ENCODE measurements at regions of chr4 and their contacts with region 1.

Region 1: GRCh38 chr4:53015681-53016080 is 153.6 kb downstream of the RASL11B start:
- DNase-seq: no peak
- ATAC-seq: 0 out of 3 replicates have a peak, but pooled peaks have one; percentile 25
- H3K4me3 ChIP-seq: no peak overlapping the region
- H3K27ac ChIP-seq: no peak overlapping the region
- H3K4me1 ChIP-seq: peaks cover 8% of the 10 kb centered on the region; the same call in 1 of the 2 replicates
- H3K27me3 ChIP-seq: no peaks in the 10 kb centered on the region
- CTCF ChIP-seq: peak; percentile 47 to 67 (median 55)
- EP300 ChIP-seq: no peak
- POLR2A ChIP-seq: no peak
- RAD21 ChIP-seq: peak; percentile 83

Region 2: GRCh38 chr4:52837726-52838558 is 177.7 kb before region 1 on chr4:
- CTCF ChIA-PET with region 1: no interaction called
- POLR2A ChIA-PET with region 1: no interaction called
- RAD21 ChIA-PET with region 1: no interaction called
- SMC1A ChIA-PET with region 1: no interaction called
- in situ Hi-C with region 1: no loop called
- intact Hi-C with region 1: no loop called
- DNase-seq: no peak
- ATAC-seq: no peak
- H3K4me3 ChIP-seq: no peak overlapping the region
- H3K27ac ChIP-seq: no peak overlapping the region
- H3K4me1 ChIP-seq: no peaks in the 10 kb centered on the region
- H3K27me3 ChIP-seq: no peaks in the 10 kb centered on the region
- CTCF ChIP-seq: no peak
- EP300 ChIP-seq: no peak
- POLR2A ChIP-seq: no peak
- RAD21 ChIP-seq: no peak

Region 3: GRCh38 chr4:53005149-53005546 is 10.5 kb before region 1 on chr4:
- CTCF ChIA-PET with region 1: interaction called, 11 read pairs
- POLR2A ChIA-PET with region 1: no interaction called
- RAD21 ChIA-PET with region 1: interaction called, 3 read pairs
- SMC1A ChIA-PET with region 1: interaction called, 7 read pairs
- in situ Hi-C with region 1: no loop called
- intact Hi-C with region 1: no loop called
- DNase-seq: no peak
- ATAC-seq: peak; percentile 60
- H3K4me3 ChIP-seq: no peak overlapping the region
- H3K27ac ChIP-seq: peak overlapping the region; percentile 46
- H3K4me1 ChIP-seq: peaks cover 27% of the 10 kb centered on the region
- H3K27me3 ChIP-seq: no peaks in the 10 kb centered on the region
- CTCF ChIP-seq: no peak
- EP300 ChIP-seq: no peak
- POLR2A ChIP-seq: no peak
- RAD21 ChIP-seq: no peak

Region 4: GRCh38 chr4:53169695-53170617 is 154.3 kb after region 1 on chr4:
- CTCF ChIA-PET with region 1: no interaction called
- POLR2A ChIA-PET with region 1: no interaction called
- RAD21 ChIA-PET with region 1: no interaction called
- SMC1A ChIA-PET with region 1: interaction called, 8 read pairs
- in situ Hi-C with region 1: no loop called
- intact Hi-C with region 1: loop called (anchors 5 kb)
- DNase-seq: peak; percentile 45
- ATAC-seq: peak; percentile 83
- H3K4me3 ChIP-seq: no peak overlapping the region
- H3K27ac ChIP-seq: no peak overlapping the region
- H3K4me1 ChIP-seq: peaks cover 3% of the 10 kb centered on the region; the same call in 1 of the 2 replicates
- H3K27me3 ChIP-seq: no peaks in the 10 kb centered on the region
- CTCF ChIP-seq: no peak
- EP300 ChIP-seq: peak in 1 of 2 experiments; percentile 32; a peak in 2 of 4 replicates
- POLR2A ChIP-seq: no peak
- RAD21 ChIP-seq: no peak

Region 5: DNA sequence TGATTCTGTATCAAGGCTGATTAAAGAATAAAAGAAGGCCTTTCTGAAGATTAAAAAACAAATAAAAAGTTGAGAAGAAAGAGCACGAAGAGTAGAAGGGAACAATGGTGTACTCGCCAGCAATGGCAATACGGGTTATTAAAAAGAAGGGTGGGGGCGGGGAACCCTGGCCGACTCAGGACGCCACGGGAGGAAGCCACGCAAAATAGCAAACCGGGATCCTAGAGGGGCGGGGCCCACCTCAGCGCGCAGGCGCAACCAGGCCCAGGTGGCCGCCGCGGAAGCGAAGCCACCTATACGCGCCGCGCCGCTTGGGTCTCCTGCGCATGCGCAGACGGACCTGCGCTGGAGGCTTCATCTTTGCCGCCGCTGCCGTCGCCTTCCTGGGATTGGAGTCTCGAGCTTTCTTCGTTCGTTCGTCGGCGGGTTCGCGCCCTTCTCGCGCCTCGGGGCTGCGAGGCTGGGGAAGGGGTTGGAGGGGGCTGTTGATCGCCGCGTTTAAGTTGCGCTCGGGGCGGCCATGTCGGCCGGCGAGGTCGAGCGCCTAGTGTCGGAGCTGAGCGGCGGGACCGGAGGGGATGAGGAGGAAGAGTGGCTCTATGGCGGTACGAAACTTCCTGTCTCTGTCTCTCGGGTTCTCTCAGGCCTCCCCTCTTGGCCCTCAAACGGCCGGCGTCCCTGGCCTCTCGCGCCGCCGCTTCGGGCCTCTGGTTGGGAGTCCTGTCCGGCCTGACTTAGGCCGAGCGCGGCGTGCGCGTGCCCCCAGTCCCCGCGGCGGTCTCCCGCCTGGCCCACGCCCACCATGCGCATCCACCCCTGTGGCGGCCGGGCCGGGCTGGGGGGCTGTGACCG is 361.9 kb after region 1 on chr4 and contains the start of gene FIP1L1:
- CTCF ChIA-PET with region 1: interaction called, 9 read pairs
- POLR2A ChIA-PET with region 1: no interaction called
- RAD21 ChIA-PET with region 1: interaction called, 4 read pairs
- SMC1A ChIA-PET with region 1: interaction called, 3 read pairs
- in situ Hi-C with region 1: no loop called
- intact Hi-C with region 1: loop called (anchors 10 kb)
- DNase-seq: peak; percentile 78
- ATAC-seq: peak; percentile 92
- H3K4me3 ChIP-seq: peak within 1 kb of the TSS; percentile 89
- H3K27ac ChIP-seq: peak within 1 kb of the TSS; percentile 84
- H3K4me1 ChIP-seq: no peaks in the 10 kb centered on the region
- H3K27me3 ChIP-seq: no peaks in the 10 kb centered on the region
- CTCF ChIP-seq: no peak
- EP300 ChIP-seq: no peak
- POLR2A ChIP-seq: peak; percentile 92
- RAD21 ChIP-seq: no peak
- polyA plus RNA-seq, gene FIP1L1: 28.1 to 40.8 TPM

Region 6: DNA sequence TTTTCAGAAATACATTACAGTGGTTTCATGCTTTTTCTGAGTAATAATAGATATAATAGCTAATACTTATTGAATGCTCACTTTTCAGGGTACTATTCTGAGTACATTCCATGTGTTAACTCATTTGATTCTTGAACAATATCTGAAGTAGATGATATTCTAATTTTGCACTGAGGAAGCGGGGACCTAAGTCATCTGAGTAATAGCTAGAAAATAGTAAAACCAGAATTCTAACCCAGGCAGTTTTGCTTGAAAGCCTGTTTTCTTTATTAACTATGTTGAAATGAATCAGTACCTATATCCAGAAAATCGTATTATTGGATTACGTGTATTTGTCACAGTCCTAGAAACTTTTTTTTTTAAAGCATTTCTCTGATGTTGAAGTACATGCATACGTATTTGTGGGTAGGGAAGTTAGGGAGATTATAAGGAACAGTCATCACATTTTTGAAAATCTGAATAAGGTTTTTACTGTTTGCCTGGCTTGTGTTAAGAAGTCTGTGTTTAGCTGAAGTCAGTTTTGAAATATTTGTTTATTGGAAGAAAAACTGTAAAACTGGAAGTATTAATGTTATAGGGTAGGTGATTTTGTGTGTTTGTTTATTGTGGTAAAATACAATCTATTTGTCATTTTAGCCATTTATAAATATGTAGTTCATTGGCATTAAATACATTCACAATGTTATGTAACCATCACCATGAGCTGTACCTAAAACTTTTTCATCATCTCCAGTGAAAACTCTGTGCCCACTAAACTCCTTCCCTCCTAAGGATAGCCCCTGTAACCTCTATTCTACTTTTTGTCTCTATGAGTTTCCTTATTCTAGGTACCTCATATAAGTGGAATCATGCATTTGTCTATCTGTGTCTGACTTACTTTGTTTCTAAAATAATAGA is 417.1 kb after region 1 on chr4:
- CTCF ChIA-PET with region 1: no interaction called
- POLR2A ChIA-PET with region 1: no interaction called
- RAD21 ChIA-PET with region 1: interaction called, 3 read pairs
- SMC1A ChIA-PET with region 1: no interaction called
- in situ Hi-C with region 1: no loop called
- intact Hi-C with region 1: loop called (anchors 10 kb)
- DNase-seq: no peak
- ATAC-seq: peak; percentile 76
- H3K4me3 ChIP-seq: no peak overlapping the region
- H3K27ac ChIP-seq: no peak overlapping the region
- H3K4me1 ChIP-seq: no peaks in the 10 kb centered on the region
- H3K27me3 ChIP-seq: no peaks in the 10 kb centered on the region
- CTCF ChIP-seq: no peak
- EP300 ChIP-seq: no peak
- POLR2A ChIP-seq: no peak
- RAD21 ChIP-seq: no peak

Region 7: GRCh38 chr4:54228056-54228527 is 1212.4 kb after region 1 on chr4:
- CTCF ChIA-PET with region 1: interaction called, 6 read pairs
- POLR2A ChIA-PET with region 1: no interaction called
- RAD21 ChIA-PET with region 1: interaction called, 9 read pairs
- SMC1A ChIA-PET with region 1: interaction called, 7 read pairs
- in situ Hi-C with region 1: loop called (anchors 10 kb)
- intact Hi-C with region 1: loop called (anchors 5 kb)
- DNase-seq: no peak
- ATAC-seq: peak; percentile 76
- H3K4me3 ChIP-seq: peak overlapping the region; percentile 54; the same call in 1 of the 2 replicates
- H3K27ac ChIP-seq: no peak overlapping the region
- H3K4me1 ChIP-seq: peaks cover 3% of the 10 kb centered on the region; the same call in 1 of the 2 replicates
- H3K27me3 ChIP-seq: peaks cover 31 to 32% of the 10 kb centered on the region in 2 experiments
- CTCF ChIP-seq: peak; percentile 64 to 83 (median 73)
- EP300 ChIP-seq: no peak; a peak in 1 of 4 replicates
- POLR2A ChIP-seq: no peak
- RAD21 ChIP-seq: peak; percentile 60